ENCODE measurements at regions of chr3 and their contacts with region 1.

Region 1: DNA sequence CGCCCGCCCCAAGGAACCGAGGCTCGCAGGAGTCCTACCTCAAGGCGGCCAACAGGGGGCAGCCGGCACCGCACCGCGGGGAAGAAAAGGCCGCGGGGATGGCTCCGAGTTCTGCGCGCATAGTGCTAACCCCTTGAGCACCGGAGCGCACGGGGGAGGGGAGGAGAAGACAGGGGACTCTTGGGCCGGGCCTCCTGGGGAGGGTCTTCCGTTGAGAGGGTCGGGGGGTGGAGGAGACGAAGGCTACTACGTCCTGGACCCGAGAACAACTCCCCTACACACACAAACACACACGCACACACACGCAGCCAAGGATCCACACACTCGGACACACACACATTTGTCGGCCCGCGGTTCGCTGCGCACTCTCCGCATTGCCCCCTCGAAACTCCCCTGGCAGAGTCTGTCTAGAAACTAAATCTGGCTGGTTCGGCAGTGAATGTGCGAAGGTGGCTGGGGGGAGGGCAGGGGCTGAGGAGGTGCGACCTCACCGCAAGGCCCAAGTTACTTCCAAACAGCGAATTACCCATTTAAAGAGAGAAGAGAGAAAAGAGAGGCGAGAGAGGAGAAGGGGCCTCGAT is 1.8 kb downstream of the WNT5A start:
- DNase-seq: peak; percentile 81
- ATAC-seq: peak; percentile 79

Region 2: GRCh38 chr3:54853573-54854404 is 631.5 kb before region 1 on chr3:
- intact Hi-C with region 1: loop called (anchors 10 kb)
- DNase-seq: peak; percentile 88
- ATAC-seq: peak; percentile 86

Region 3: GRCh38 chr3:54951405-54951804 is 533.9 kb before region 1 on chr3:
- intact Hi-C with region 1: loop called (anchors 10 kb)
- DNase-seq: peak; percentile 87
- ATAC-seq: peak; percentile 96

Region 4: DNA sequence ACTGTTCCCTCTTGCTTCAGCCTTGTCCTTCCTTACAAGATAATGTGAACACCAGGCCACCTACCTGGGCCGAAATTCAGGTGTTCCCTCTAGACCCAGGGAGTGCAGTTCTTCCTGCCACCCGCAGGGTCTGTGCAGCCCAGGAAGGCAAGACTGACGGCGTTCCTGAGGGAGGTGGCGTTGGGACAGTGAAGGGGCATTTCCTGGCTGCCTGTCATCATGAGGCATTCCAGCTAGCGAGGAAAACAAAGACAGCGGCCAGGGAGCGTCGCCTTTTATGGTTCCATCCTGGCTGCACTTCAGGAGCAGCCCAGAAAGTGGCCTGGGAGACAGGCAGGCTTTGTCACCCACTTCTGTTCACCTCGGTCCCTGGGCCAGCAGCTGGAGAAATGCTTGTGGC is 86.6 kb after region 1 on chr3:
- intact Hi-C with region 1: loop called (anchors 2 kb)
- DNase-seq: peak; percentile 79
- ATAC-seq: peak; percentile 93

Region 5: DNA sequence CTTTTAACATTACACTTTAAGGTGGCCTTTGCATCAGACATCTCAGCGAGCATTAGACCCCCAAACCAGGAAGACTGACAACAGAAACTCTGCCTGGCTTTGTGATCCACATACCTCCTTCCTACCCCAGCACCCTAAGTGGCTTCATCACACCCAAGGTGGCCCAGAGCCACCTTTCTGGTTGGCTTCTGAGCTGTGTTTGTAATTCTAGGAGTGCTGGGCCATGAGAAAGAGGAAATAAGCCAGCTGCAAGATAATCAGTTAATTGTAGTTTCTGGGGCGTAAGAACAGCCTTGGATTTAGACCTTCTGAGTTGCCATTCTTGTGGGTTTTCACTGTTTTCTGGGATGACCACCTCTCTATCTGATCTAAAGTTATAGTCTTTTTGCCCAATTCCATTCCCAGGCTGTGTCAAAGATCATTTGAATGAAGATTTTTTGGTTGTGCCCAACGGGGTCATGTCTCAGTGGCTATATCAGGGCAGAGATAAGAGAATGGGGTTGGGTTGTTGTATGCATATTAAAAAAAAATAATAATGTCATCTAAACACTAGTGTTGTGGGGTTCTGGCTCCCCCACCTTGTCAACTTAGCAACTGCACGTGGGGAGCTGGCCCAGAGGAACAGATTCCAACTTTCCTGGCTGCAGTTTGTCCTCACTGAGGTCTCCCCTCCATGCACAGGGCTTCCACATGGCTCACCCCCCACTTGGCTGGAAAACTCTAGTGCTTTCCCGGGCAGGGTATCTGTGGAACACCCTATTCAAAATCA is 236.6 kb after region 1 on chr3:
- intact Hi-C with region 1: loop called (anchors 2 kb)
- DNase-seq: no peak
- ATAC-seq: peak; percentile 20

Region 6: GRCh38 chr3:56042326-56042951 is 557.1 kb after region 1 on chr3:
- intact Hi-C with region 1: loop called (anchors 2 kb)
- DNase-seq: no peak
- ATAC-seq: peak; percentile 87

Region 7: GRCh38 chr3:56251343-56251945 is 766.1 kb after region 1 on chr3:
- intact Hi-C with region 1: loop called (anchors 2 kb)
- DNase-seq: no peak
- ATAC-seq: no peak

Measured in Right ventricle myocardium inferior (tissue), 1 donor.